ENCODE measurements at regions of chr1 and their contacts with region 1.

Region 1: GRCh38 chr1:117860896-117861610 is 68.4 kb downstream of the GDAP2 start:
- DNase-seq: no peak
- H3K4me3 ChIP-seq: no peak overlapping the region
- H3K27ac ChIP-seq: no peak overlapping the region
- H3K4me1 ChIP-seq: no peaks in the 10 kb centered on the region
- CTCF ChIP-seq: no peak

Region 2: DNA sequence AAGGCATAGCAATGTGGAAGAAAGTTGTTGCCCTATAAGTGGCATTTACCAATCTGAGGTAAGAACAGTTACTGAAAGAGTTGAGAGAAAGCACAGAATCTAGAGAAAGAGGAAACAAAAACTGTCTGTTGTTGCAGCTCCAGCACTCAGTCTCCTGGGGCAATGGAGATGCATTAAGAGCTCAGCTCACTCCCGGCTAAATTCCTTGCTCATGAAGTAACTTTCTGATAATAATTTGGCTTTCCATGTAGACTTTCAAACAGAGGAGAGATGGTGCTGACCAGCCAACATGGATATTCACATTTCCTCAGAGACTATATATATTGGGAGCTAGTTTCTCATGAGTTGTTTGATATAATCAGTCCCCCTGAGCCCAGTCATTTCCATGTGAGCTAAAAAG is 67.0 kb before region 1 on chr1:
- CTCF ChIA-PET with region 1: no interaction called
- POLR2A ChIA-PET with region 1: no interaction called
- intact Hi-C with region 1: loop called (anchors 5 kb)
- DNase-seq: no peak
- H3K4me3 ChIP-seq: no peak overlapping the region
- H3K27ac ChIP-seq: no peak overlapping the region
- H3K4me1 ChIP-seq: no peaks in the 10 kb centered on the region
- CTCF ChIP-seq: no peak

Region 3: GRCh38 chr1:117814856-117815797 is 45.9 kb before region 1 on chr1:
- CTCF ChIA-PET with region 1: no interaction called
- POLR2A ChIA-PET with region 1: interaction called, 3 read pairs
- intact Hi-C with region 1: loop called (anchors 5 kb)
- DNase-seq: no peak
- H3K4me3 ChIP-seq: no peak overlapping the region
- H3K27ac ChIP-seq: no peak overlapping the region
- H3K4me1 ChIP-seq: no peaks in the 10 kb centered on the region
- CTCF ChIP-seq: no peak

Region 4: GRCh38 chr1:118169016-118169415 is 308.0 kb after region 1 on chr1:
- CTCF ChIA-PET with region 1: no interaction called
- POLR2A ChIA-PET with region 1: no interaction called
- intact Hi-C with region 1: no loop called
- DNase-seq: no peak
- H3K4me3 ChIP-seq: no peak overlapping the region
- H3K27ac ChIP-seq: no peak overlapping the region
- H3K4me1 ChIP-seq: no peaks in the 10 kb centered on the region
- CTCF ChIP-seq: no peak

Region 5: GRCh38 chr1:118575060-118575459 is 714.0 kb after region 1 on chr1:
- CTCF ChIA-PET with region 1: no interaction called
- POLR2A ChIA-PET with region 1: no interaction called
- intact Hi-C with region 1: no loop called
- DNase-seq: no peak
- H3K4me3 ChIP-seq: no peak overlapping the region
- H3K27ac ChIP-seq: no peak overlapping the region
- H3K4me1 ChIP-seq: no peaks in the 10 kb centered on the region
- CTCF ChIP-seq: no peak

Measured in OCI-LY7 (cell line).